ENCODE measurements at regions of chr12 and their contacts with region 1.

Region 1: DNA sequence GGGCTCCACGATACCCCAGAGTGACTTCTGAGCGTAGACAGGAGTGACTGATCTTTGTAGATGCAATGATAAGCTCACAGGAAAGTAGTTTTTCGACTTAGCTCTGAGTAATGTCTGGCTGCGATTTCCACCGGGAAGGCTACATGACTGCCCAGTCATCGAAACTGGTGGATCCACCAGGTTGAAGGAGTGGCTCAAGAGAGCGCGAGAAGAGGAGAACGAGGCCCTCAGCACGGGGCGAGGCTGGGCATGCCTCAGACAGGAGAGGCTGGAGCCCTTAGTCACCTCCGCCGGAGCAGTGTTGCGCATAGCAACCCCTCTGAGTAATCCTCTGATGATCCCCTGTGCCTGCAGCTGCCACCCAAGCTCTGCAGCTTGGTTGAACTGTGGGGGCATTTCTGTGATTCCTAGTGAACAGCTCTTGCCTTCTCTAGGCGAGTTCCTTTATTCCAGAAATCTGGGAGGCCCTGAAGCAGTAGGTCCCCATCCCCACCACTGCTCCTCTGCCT is 25.6 kb downstream of the ELK3 start:
- DNase-seq: no peak
- ATAC-seq: no peak

Region 2: GRCh38 chr12:96061864-96062453 is 157.8 kb before region 1 on chr12:
- intact Hi-C with region 1: loop called (anchors 5 to 10 kb)
- DNase-seq: peak; percentile 61 to 88
- ATAC-seq: peak; percentile 97

Measured in left colon (tissue), 2 donors.